ENCODE measurements at regions of chr22 and their contacts with region 1.

Region 1: DNA sequence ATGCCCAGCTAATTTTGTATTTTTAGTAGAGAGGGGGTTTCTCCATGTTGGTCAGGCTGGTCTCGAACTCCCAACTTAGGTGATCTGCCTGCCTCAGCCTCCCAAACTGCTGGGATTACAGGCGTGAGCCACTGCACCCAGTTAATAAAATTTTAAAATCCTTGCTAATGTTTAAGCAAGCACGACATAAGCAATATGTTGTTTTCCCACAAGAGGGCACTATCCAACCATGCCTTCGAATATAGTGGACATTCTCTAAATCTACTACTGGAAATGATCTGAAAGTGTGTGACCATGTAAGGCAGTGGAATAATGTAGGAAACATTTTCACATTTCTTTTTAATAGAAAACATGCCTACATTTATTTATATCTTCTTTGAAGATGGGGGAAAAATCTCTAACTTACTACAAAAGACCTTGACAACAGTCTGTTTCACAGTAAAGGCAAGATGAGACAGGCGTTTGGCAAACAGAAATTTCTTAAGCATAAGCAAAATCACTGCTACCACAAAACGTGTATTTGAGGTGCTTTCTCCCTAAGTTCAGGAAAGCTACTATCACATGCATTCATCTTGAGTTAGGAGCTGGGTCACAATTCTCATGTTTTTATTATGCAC is 38.2 kb downstream of the PITPNB start:
- DNase-seq: peak; percentile 53
- H3K4me3 ChIP-seq: no peak overlapping the region
- CTCF ChIP-seq: peak; percentile 51

Region 2: GRCh38 chr22:27718186-27719032 is 162.5 kb before region 1 on chr22:
- CTCF ChIA-PET with region 1: no interaction called
- POLR2A ChIA-PET with region 1: no interaction called
- DNase-seq: peak; percentile 73
- H3K4me3 ChIP-seq: no peak overlapping the region
- CTCF ChIP-seq: no peak

Region 3: GRCh38 chr22:27850000-27850465 is 30.9 kb before region 1 on chr22:
- CTCF ChIA-PET with region 1: interaction called, 12 read pairs
- POLR2A ChIA-PET with region 1: no interaction called
- DNase-seq: no peak
- H3K4me3 ChIP-seq: no peak overlapping the region
- CTCF ChIP-seq: no peak

Region 4: DNA sequence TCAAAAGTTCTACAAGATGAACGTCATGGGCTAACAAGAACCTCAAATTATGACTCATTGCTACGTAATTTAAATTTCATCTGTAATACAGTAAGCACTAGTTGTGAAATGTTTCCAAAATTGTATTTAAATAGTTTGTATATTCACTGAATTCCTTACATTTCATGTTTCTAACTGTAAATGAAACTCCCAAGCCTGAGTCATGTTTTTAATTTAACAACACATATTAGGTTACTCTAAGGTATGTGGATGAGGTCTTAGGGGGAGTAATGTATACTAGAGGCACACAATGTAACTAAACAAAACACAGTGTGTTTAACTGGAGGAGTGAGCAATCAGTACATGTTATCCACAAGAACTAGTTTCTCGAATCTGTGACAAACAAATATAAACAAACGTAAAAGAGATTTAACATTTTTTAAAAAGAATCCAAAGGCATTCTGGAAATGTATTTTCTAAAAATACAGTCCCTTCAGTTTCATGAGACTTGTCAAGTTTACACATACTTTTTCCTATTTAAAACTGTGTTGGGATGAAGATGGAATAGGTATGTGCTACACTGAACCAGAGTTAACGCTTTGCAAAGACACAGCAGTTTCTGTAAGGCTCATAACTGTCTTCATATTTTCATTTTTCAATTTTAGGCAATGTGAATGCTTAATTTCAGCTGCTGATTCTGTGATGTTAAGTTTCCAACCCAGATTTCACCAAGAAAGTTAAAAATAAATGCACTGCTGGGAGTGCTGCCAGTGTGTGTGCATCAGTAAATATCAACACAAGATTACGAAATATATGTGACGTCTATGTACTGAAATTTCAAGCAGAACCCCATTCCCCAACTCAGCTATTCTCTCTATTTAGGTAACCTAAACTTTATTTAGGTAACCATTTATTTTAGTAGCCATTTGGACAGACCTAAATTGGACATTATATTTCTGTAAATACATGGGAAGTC is 14.5 kb before region 1 on chr22:
- CTCF ChIA-PET with region 1: interaction called, 48 read pairs
- POLR2A ChIA-PET with region 1: interaction called, 5 read pairs
- DNase-seq: peak; percentile 93
- H3K4me3 ChIP-seq: no peak overlapping the region
- CTCF ChIP-seq: no peak

Region 5: GRCh38 chr22:27980424-27981148 is 99.7 kb after region 1 on chr22:
- CTCF ChIA-PET with region 1: interaction called, 10 read pairs
- POLR2A ChIA-PET with region 1: no interaction called
- DNase-seq: no peak
- H3K4me3 ChIP-seq: no peak overlapping the region
- CTCF ChIP-seq: no peak

Region 6: GRCh38 chr22:28009272-28009827 is 128.5 kb after region 1 on chr22:
- CTCF ChIA-PET with region 1: interaction called, 514 read pairs
- POLR2A ChIA-PET with region 1: no interaction called
- DNase-seq: peak; percentile 45
- H3K4me3 ChIP-seq: no peak overlapping the region
- CTCF ChIP-seq: peak; percentile 93

Region 7: GRCh38 chr22:28381429-28382167 is 500.7 kb after region 1 on chr22:
- CTCF ChIA-PET with region 1: no interaction called
- POLR2A ChIA-PET with region 1: no interaction called
- DNase-seq: no peak
- H3K4me3 ChIP-seq: no peak overlapping the region
- CTCF ChIP-seq: no peak

Measured in AG04449 (cell line).